ENCODE measurements at regions of chr3 and their contacts with region 1.

Region 1: GRCh38 chr3:152695840-152696239 is 139.1 kb upstream of the P2RY1 start:
- DNase-seq: no peak
- ATAC-seq: no peak
- H3K4me3 ChIP-seq: no peak overlapping the region
- H3K27ac ChIP-seq: no peak overlapping the region
- H3K4me1 ChIP-seq: no peaks in the 10 kb centered on the region
- H3K27me3 ChIP-seq: no peaks in the 10 kb centered on the region
- CTCF ChIP-seq: no peak

Region 2: GRCh38 chr3:152595975-152596790 is 99.7 kb before region 1 on chr3:
- CTCF ChIA-PET with region 1: no interaction called
- POLR2A ChIA-PET with region 1: no interaction called
- intact Hi-C with region 1: no loop called
- DNase-seq: no peak
- ATAC-seq: no peak
- H3K4me3 ChIP-seq: no peak overlapping the region
- H3K27ac ChIP-seq: no peak overlapping the region
- H3K4me1 ChIP-seq: no peaks in the 10 kb centered on the region
- H3K27me3 ChIP-seq: peaks cover 35% of the 10 kb centered on the region
- CTCF ChIP-seq: no peak

Region 3: GRCh38 chr3:152937234-152937633 is 241.4 kb after region 1 on chr3:
- CTCF ChIA-PET with region 1: no interaction called
- POLR2A ChIA-PET with region 1: no interaction called
- intact Hi-C with region 1: loop called (anchors 5 kb)
- DNase-seq: no peak
- ATAC-seq: no peak
- H3K4me3 ChIP-seq: no peak overlapping the region
- H3K27ac ChIP-seq: no peak overlapping the region
- H3K4me1 ChIP-seq: peaks cover 5% of the 10 kb centered on the region
- H3K27me3 ChIP-seq: no peaks in the 10 kb centered on the region
- CTCF ChIP-seq: peak; percentile 31; the same call in 1 of the 2 replicates